Stomach (tissue), 19 donors: ENCODE measurements at regions of chr1 and their contacts with region 1.

Region 1: DNA sequence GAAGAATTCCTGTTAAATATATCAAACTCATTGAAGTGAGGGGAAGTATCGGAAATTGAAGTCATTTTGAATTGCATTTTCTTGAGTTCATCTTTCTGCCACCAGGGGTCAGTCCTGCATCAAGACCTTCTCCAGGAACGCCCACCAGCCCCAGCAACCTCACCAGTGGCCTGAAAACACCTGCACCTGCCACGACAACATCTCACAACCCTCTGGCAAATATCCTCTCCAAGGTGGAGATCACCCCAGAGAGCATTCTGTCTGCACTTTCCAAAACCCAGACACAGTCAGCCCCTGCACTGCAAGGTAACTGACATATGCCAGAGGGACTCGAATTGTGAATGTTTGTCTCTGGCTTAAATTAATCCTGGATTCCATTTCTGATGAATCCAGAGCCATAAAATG is 22.8 kb upstream of the TARS2 start:
- DNase-seq: peak; percentile 63 to 86
- H3K4me3 ChIP-seq: no peak overlapping the region
- H3K27ac ChIP-seq: no peak overlapping the region
- H3K4me1 ChIP-seq: peaks cover 0 to 5% (median 2%) of the 10 kb centered on the region in 4 donors
- H3K27me3 ChIP-seq: no peaks in the 10 kb centered on the region
- CTCF ChIP-seq: peak in 5 of 7 experiments; percentile 43 to 84 (median 69)
- EP300 ChIP-seq: no peak
- POLR2A ChIP-seq: no peak

Region 2: DNA sequence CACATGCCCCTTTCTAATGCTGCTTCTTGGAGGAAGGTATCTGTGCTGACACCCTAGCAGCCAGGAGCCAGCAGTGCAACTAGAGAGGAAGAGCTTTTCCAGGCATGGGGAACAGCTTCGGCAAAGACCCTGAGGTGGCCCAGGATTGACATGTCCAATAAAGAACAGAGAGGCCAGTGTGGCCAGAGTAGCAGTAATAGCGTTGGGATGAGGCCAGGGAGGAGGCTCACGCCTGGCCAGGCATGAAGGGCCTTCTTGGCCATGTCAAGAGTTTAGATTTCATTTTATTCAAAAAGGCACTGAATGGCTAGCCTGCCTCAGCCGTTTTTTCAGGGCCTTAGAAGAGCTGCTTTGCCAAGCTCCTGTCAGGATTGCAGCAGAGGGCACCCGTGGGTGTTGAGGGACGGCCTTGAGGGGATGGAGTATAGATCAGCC is 68.5 kb after region 1 on chr1:
- intact Hi-C with region 1: loop called (anchors 5 kb)
- DNase-seq: peak in 1 of 2 donors; percentile 28
- H3K4me3 ChIP-seq: no peak overlapping the region
- H3K27ac ChIP-seq: peak overlapping the region in 4 of 5 donors; percentile 71 to 88 (median 84)
- H3K4me1 ChIP-seq: peaks cover 4 to 48% (median 30%) of the 10 kb centered on the region in 4 donors
- H3K27me3 ChIP-seq: no peaks in the 10 kb centered on the region
- CTCF ChIP-seq: no peak
- EP300 ChIP-seq: no peak
- POLR2A ChIP-seq: no peak